ENCODE measurements at regions of chr1 and their contacts with region 1.

Region 1: DNA sequence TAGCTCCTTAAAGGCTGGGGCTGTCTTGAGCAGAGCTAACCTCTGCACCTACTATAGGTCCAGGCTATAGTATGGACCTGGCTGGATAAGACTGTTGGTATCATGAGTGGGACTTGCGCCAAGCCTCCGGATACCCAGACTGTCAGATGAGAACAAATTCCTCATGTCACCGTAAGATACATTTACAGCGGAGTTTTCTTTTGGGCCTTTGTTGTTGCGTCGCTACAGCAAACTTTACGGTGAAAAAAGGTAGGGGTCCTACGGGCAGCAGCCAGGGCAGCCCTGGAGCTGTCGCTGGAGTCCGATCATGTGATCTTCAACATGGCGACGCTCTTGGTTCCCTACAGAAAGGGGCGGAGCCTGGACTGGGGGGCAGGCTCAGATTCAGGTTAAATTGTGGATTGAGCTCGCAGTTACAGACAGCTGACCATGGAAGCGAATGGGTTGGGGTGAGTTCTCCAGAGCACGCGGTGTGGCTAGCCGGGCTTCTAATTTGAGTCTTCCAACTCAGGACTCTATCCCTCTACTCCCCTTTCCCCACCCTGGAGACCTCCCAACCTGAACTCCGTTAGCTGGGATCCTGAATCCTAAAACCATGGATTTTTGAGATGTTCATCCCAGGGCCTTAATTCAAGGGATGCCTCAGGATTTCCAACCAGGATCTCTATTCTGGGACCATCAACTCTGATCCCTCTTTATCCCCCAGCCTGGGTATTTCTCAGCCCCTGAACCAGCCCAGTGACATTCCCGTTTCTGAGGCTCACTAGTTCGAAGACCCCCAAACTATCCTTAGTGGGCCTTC is at the start of gene UROD:
- DNase-seq: peak; percentile 96
- ATAC-seq: peak; percentile 83
- H3K4me3 ChIP-seq: peak within 1 kb of the TSS; percentile 82
- H3K27ac ChIP-seq: peak within 1 kb of the TSS; percentile 53
- H3K4me1 ChIP-seq: peaks cover 12% of the 10 kb centered on the region
- H3K27me3 ChIP-seq: no peaks in the 10 kb centered on the region
- CTCF ChIP-seq: no peak
- POLR2A ChIP-seq: peak; percentile 85
- RAD21 ChIP-seq: peak; percentile 20
- total RNA-seq, gene UROD: 165 and 220 TPM in 2 replicates

Region 2: DNA sequence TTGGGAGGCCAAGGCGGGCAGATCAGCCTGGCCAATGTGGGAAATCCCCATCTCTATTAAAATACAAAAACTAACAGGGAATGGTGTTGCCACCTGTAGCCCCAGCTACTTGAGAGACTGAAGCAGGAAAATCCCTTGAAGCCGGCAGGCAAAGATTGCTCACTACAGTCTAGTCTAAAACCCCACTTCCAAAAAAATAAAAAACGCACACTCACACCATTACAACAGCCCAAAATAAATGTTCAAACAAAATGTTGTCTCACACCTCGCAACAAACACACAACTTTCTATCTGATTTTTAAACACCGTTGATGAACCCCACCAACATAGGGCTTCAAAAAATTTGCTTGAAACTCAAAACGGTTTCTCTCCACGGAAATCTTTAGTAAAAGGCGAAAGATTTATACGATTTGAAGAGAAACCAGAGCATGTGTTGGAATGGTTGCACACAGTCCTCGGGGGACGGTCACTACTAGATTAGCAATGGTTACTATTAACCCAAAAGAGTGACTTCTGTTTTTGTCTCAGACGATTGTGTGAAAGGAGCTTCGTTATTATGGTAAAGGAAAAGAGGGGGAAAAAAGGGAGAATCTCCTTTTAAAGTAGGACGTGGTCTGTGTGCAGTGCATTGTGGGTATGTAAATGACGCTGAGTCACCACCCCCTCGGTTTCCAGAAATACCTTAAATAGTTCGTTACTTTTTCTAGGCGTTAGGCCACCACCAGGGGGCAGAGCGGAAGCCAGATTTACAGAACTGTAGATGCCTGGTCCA is 281.1 kb before region 1 on chr1 and contains the start of gene RNU5D-1:
- CTCF ChIA-PET with region 1: interaction called, 3 read pairs
- POLR2A ChIA-PET with region 1: no interaction called
- dilution Hi-C with region 1: no loop called
- in situ Hi-C with region 1: no loop called
- intact Hi-C with region 1: loop called (anchors 5 kb)
- DNase-seq: peak; percentile 98
- ATAC-seq: peak; percentile 84
- H3K4me3 ChIP-seq: peak within 1 kb of the TSS; percentile 9; the same call in 1 of the 2 replicates
- H3K27ac ChIP-seq: peak within 1 kb of the TSS; percentile 62
- H3K4me1 ChIP-seq: peaks cover 2% of the 10 kb centered on the region; the same call in 1 of the 2 replicates
- H3K27me3 ChIP-seq: no peaks in the 10 kb centered on the region
- CTCF ChIP-seq: peak; percentile 89
- POLR2A ChIP-seq: peak; percentile 99
- RAD21 ChIP-seq: peak; percentile 58
- total RNA-seq, gene RNU5D-1: not detected in 2 replicates

Region 3: GRCh38 chr1:44792783-44793714 is 219.0 kb before region 1 on chr1:
- CTCF ChIA-PET with region 1: interaction called, 7 read pairs
- POLR2A ChIA-PET with region 1: no interaction called
- dilution Hi-C with region 1: no loop called
- in situ Hi-C with region 1: no loop called
- intact Hi-C with region 1: loop called (anchors 5 kb)
- DNase-seq: no peak
- ATAC-seq: no peak
- H3K4me3 ChIP-seq: no peak overlapping the region
- H3K27ac ChIP-seq: no peak overlapping the region
- H3K4me1 ChIP-seq: no peaks in the 10 kb centered on the region
- H3K27me3 ChIP-seq: peaks cover 2% of the 10 kb centered on the region; the same call in 1 of the 2 replicates
- CTCF ChIP-seq: no peak
- POLR2A ChIP-seq: no peak
- RAD21 ChIP-seq: no peak

Region 4: GRCh38 chr1:44835738-44836675 is 176.0 kb before region 1 on chr1:
- CTCF ChIA-PET with region 1: interaction called, 7 read pairs
- POLR2A ChIA-PET with region 1: no interaction called
- dilution Hi-C with region 1: no loop called
- in situ Hi-C with region 1: no loop called
- intact Hi-C with region 1: loop called (anchors 1 kb)
- DNase-seq: peak; percentile 84
- ATAC-seq: peak; percentile 96
- H3K4me3 ChIP-seq: no peak overlapping the region
- H3K27ac ChIP-seq: no peak overlapping the region
- H3K4me1 ChIP-seq: no peaks in the 10 kb centered on the region
- H3K27me3 ChIP-seq: no peaks in the 10 kb centered on the region
- CTCF ChIP-seq: peak; percentile 84
- POLR2A ChIP-seq: no peak
- RAD21 ChIP-seq: peak; percentile 88

Region 5: DNA sequence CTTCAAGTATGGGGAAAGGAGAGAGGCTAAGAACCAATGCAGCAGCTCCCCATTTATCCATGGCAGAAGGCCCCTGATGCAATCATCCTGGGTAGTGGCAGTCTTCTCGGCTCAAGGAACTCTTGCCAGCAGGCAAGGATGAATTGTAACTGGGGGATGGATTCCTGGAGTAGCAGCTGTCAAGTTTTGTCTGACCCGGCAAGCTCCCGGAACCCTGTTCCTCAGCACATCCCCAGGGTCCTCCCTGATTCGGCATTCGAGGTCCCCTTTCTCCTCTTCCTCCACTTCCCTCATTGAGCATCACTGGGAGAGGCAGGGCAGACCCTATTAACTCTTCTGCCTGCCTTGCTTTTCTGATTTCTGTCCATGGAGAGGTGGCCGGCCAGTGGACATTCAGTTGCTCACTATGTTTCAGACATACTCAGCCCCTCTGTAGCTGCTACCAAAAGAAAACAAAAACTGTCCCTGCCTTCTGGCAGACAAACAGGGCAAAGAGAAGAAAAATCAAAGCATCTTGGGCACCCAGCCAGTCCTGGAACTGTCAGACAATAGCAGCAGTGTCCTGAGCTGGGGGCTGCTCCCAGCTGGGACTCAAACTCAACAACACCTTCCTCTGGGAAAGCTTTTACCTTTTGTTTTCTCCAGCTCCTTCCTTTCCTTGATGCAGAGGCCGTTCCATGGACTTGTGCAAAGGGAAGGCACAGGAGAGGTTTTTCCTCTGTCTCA is 163.4 kb before region 1 on chr1:
- CTCF ChIA-PET with region 1: no interaction called
- POLR2A ChIA-PET with region 1: no interaction called
- dilution Hi-C with region 1: no loop called
- in situ Hi-C with region 1: no loop called
- intact Hi-C with region 1: no loop called
- DNase-seq: no peak
- ATAC-seq: peak; percentile 14; the same call in 1 of the 2 replicates
- H3K4me3 ChIP-seq: no peak overlapping the region
- H3K27ac ChIP-seq: no peak overlapping the region
- H3K4me1 ChIP-seq: no peaks in the 10 kb centered on the region
- H3K27me3 ChIP-seq: no peaks in the 10 kb centered on the region
- CTCF ChIP-seq: no peak
- POLR2A ChIP-seq: no peak
- RAD21 ChIP-seq: no peak

Region 6: GRCh38 chr1:44881011-44881632 is 130.9 kb before region 1 on chr1:
- CTCF ChIA-PET with region 1: no interaction called
- POLR2A ChIA-PET with region 1: no interaction called
- dilution Hi-C with region 1: no loop called
- in situ Hi-C with region 1: no loop called
- intact Hi-C with region 1: no loop called
- DNase-seq: peak; percentile 85
- ATAC-seq: peak; percentile 97
- H3K4me3 ChIP-seq: no peak overlapping the region
- H3K27ac ChIP-seq: no peak overlapping the region
- H3K4me1 ChIP-seq: no peaks in the 10 kb centered on the region; the same call in 1 of the 2 replicates
- H3K27me3 ChIP-seq: no peaks in the 10 kb centered on the region
- CTCF ChIP-seq: no peak
- POLR2A ChIP-seq: no peak
- RAD21 ChIP-seq: no peak

Region 7: DNA sequence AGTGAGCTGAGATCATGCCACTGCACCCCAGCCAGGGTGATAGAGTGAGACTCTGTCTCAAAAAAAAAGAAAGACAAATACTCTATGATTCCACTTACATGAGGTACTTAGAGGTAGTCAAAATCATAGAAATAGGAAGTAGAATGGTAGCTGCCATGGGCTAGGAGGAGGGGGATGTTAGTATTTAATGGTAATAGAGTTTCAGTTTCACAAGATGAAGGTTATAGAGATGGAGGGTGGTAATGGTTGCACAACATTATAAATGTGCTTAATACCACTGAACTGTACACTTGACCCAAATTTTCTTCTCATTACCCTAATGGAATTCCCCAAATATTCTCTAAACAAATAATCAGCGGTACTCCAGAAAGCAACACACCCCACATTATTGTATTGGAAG is 38.4 kb before region 1 on chr1:
- CTCF ChIA-PET with region 1: no interaction called
- POLR2A ChIA-PET with region 1: no interaction called
- dilution Hi-C with region 1: no loop called
- in situ Hi-C with region 1: no loop called
- intact Hi-C with region 1: no loop called
- DNase-seq: no peak
- ATAC-seq: no peak
- H3K4me3 ChIP-seq: no peak overlapping the region
- H3K27ac ChIP-seq: no peak overlapping the region
- H3K4me1 ChIP-seq: no peaks in the 10 kb centered on the region
- H3K27me3 ChIP-seq: no peaks in the 10 kb centered on the region
- CTCF ChIP-seq: no peak
- POLR2A ChIP-seq: no peak
- RAD21 ChIP-seq: no peak

Region 8: DNA sequence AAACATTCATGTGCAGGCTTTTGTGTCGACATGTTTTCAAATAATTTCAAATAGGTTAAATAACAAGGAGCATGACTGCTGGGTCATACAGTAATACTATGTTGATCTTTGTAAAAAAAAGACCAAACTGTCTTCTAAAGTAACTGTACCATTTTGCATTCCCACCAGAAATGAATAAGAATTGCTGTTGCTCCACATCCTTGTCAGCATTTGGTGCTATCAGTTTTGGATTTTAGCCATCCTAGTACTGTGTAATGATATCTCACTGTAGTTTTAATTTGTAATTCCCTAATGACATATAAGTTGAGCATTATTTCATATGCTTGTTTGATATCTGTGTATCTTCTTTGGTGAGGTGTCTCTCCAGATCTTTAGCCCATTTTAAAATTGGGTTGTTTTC is 11.6 kb after region 1 on chr1:
- CTCF ChIA-PET with region 1: no interaction called
- POLR2A ChIA-PET with region 1: no interaction called
- dilution Hi-C with region 1: no loop called
- in situ Hi-C with region 1: no loop called
- intact Hi-C with region 1: no loop called
- DNase-seq: no peak
- ATAC-seq: no peak
- H3K4me3 ChIP-seq: no peak overlapping the region
- H3K27ac ChIP-seq: no peak overlapping the region
- H3K4me1 ChIP-seq: no peaks in the 10 kb centered on the region
- H3K27me3 ChIP-seq: peaks cover 1% of the 10 kb centered on the region; the same call in 1 of the 2 replicates
- CTCF ChIP-seq: no peak
- POLR2A ChIP-seq: no peak
- RAD21 ChIP-seq: no peak

Region 9: DNA sequence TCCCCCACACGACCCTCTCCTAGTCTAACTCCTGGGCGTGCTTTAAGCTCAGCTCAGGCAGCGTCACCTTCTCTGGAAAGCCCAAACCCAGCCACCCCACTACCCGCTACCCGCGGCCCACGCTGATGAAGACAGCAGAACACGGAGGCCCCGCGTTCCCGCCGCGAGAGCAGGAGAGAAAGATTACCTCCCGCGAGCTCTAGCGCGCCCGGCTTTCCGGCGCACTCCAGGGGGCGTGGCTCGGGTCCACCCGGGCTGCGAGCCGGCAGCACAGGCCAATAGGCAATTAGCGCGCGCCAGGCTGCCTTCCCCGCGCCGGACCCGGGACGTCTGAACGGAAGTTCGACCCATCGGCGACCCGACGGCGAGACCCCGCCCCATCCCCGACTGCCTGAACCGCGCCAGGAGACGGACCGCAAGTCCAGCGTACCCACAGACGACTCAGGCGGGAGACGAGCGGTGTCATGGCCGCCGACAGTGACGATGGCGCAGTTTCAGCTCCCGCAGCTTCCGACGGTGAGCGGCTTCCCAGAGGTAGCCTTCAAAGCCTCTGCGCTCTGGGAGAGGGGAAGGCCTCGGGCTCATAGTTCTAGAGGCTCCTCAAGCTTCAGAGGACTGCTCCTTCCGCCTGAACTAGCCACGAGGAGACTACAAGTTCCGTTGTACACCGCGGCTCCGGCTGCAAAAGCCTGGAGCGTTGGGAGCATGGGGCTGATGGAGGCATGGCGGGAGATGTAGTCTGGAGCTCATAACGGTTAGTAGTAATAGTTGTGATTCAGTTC is 327.9 kb after region 1 on chr1 and contains the starts of genes MUTYH and TOE1:
- CTCF ChIA-PET with region 1: no interaction called
- POLR2A ChIA-PET with region 1: no interaction called
- dilution Hi-C with region 1: no loop called
- in situ Hi-C with region 1: no loop called
- intact Hi-C with region 1: loop called (anchors 5 kb)
- DNase-seq: peak; percentile 86
- ATAC-seq: peak; percentile 95
- H3K4me3 ChIP-seq: peak within 1 kb of the TSS; percentile 79
- H3K27ac ChIP-seq: peak within 1 kb of the TSS; percentile 94
- H3K4me1 ChIP-seq: peaks cover 10% of the 10 kb centered on the region; the same call in 1 of the 2 replicates
- H3K27me3 ChIP-seq: no peaks in the 10 kb centered on the region
- CTCF ChIP-seq: 0 out of 2 replicates have a peak, but pooled peaks have one; percentile 0
- POLR2A ChIP-seq: peak; percentile 81
- RAD21 ChIP-seq: no peak
- total RNA-seq, gene MUTYH: 8.9 and 9.1 TPM in 2 replicates
- total RNA-seq, gene TOE1: 18.6 and 18.9 TPM in 2 replicates

Region 10: DNA sequence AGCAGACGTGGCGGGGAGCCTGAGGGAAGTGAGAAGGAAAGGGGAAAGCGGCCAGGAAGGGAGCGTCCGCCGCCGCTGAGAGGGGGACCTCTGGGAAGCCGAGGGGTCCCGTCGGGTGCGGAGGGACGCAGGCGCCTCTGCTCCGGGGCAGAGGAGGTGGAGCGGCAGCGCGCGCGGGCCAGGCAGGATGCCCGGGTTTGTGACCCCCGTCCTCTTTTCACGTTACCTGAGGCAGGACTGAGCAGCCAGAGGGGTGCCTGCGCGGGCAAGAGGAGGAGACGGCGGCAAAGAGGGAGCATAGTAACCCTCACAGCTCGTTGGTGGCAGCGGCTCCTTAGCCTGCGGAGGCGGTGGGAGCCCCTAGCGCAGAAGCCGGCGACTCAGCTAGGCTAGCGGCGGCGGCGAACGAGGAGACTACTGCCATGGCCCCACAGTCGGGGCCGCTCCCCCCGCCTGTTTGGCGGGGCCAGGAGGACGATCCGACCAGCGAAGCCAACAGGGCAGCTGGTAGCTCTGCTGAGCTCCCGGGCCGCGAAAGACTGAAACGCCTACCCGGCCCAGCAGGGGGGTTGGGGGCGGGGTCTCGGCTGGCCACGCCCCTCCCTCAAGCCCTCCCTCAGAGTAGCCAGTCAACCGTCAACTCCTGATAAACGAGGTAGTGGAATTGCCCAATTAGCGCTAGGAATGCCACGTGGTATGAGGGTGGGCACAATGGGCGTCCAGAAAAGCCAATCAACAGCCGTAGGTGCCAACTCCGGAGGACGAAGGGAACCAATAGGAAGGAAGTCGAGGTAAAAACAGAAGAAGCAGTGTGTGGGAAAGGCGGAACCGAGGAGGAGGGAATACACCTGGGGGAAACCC is 478.8 kb after region 1 on chr1 and contains the start of gene TESK2:
- CTCF ChIA-PET with region 1: interaction called, 4 read pairs
- POLR2A ChIA-PET with region 1: no interaction called
- dilution Hi-C with region 1: no loop called
- in situ Hi-C with region 1: loop called (anchors 5 kb)
- intact Hi-C with region 1: loop called (anchors 2 kb)
- DNase-seq: peak; percentile 99
- ATAC-seq: peak; percentile 96
- H3K4me3 ChIP-seq: peak within 1 kb of the TSS; percentile 63
- H3K27ac ChIP-seq: peak within 1 kb of the TSS; percentile 8
- H3K4me1 ChIP-seq: no peaks in the 10 kb centered on the region
- H3K27me3 ChIP-seq: no peaks in the 10 kb centered on the region
- CTCF ChIP-seq: 0 out of 2 replicates have a peak, but pooled peaks have one; percentile 14
- POLR2A ChIP-seq: peak; percentile 62; the same call in 1 of the 2 replicates
- RAD21 ChIP-seq: no peak
- total RNA-seq, gene TESK2: 0.83 and 0.90 TPM in 2 replicates

Region 11: GRCh38 chr1:45569962-45570581 is 558.0 kb after region 1 on chr1:
- CTCF ChIA-PET with region 1: no interaction called
- POLR2A ChIA-PET with region 1: no interaction called
- dilution Hi-C with region 1: no loop called
- in situ Hi-C with region 1: loop called (anchors 5 kb)
- intact Hi-C with region 1: loop called (anchors 5 kb)
- DNase-seq: peak; percentile 78
- ATAC-seq: peak; percentile 98
- H3K4me3 ChIP-seq: no peak overlapping the region
- H3K27ac ChIP-seq: no peak overlapping the region
- H3K4me1 ChIP-seq: no peaks in the 10 kb centered on the region
- H3K27me3 ChIP-seq: no peaks in the 10 kb centered on the region
- CTCF ChIP-seq: peak; percentile 97
- POLR2A ChIP-seq: peak; percentile 42; the same call in 1 of the 2 replicates
- RAD21 ChIP-seq: peak; percentile 96